Naive thymus-derived CD4-positive, alpha-beta T cell (primary cell): ENCODE measurements at regions of chrX and their contacts with region 1.

Region 1: GRCh38 chrX:14029425-14030173 is at the start of gene GEMIN8:
- DNase-seq: peak; percentile 72 to 93 (median 87)
- ATAC-seq: peak; percentile 97
- H3K4me3 ChIP-seq: peak within 1 kb of the TSS; percentile 60
- H3K4me3 Mint-ChIP-seq: peak within 1 kb of the TSS; percentile 80 to 100 (median 94)
- H3K27ac ChIP-seq: peak within 1 kb of the TSS; percentile 90
- H3K27ac Mint-ChIP-seq: peak within 1 kb of the TSS; percentile 91 to 100 (median 96)
- H3K4me1 ChIP-seq: peaks cover 19 to 26% of the 10 kb centered on the region in 2 donors
- H3K4me1 Mint-ChIP-seq: peaks cover 9 to 51% (median 41%) of the 10 kb centered on the region in 7 donors
- H3K27me3 ChIP-seq: no peaks in the 10 kb centered on the region
- H3K27me3 Mint-ChIP-seq: peaks cover 0 to 1% (median 0%) of the 10 kb centered on the region in 5 donors
- total RNA-seq, gene GEMIN8: 9.7 to 20.4 (median 11.7) TPM

Region 2: GRCh38 chrX:12791257-12792228 is 1238.1 kb before region 1 on chrX and contains the start of gene PRPS2:
- CTCF ChIA-PET with region 1: no interaction called
- POLR2A ChIA-PET with region 1: no interaction called
- intact Hi-C with region 1: loop called in 1 of 2 experiments (anchors 5 kb)
- DNase-seq: peak; percentile 39 to 74 (median 69)
- ATAC-seq: peak; percentile 96
- H3K4me3 ChIP-seq: peak within 1 kb of the TSS; percentile 74
- H3K4me3 Mint-ChIP-seq: peak within 1 kb of the TSS; percentile 85 to 92 (median 88)
- H3K27ac ChIP-seq: peak within 1 kb of the TSS; percentile 73
- H3K27ac Mint-ChIP-seq: peak within 1 kb of the TSS; percentile 59 to 86 (median 81)
- H3K4me1 ChIP-seq: peaks cover 0 to 6% of the 10 kb centered on the region in 2 donors
- H3K4me1 Mint-ChIP-seq: peaks cover 8 to 44% (median 34%) of the 10 kb centered on the region in 7 donors
- H3K27me3 ChIP-seq: no peaks in the 10 kb centered on the region
- H3K27me3 Mint-ChIP-seq: peaks cover 0 to 16% (median 0%) of the 10 kb centered on the region in 5 donors
- total RNA-seq, gene PRPS2: 24.7 to 95.8 (median 32.0) TPM

Region 3: DNA sequence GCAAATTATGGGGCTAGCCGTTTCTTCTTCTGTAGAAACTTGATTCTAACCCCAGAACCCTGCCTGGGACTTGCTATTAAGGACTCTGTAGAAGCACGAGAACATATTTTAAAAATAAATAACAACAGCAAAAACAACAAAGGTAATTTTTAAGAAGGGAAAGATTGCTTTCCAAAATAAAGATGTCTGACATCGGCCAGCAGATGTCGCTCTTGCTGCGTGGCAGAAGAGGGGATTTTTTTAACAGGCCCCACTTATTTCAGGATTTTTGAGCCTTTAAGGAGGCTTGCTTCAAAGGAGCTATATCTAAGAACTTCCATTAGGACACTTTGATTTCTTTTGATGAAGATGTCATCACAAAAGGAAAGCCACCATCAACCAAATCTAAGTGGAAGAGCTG is 523.0 kb before region 1 on chrX:
- CTCF ChIA-PET with region 1: interaction called, 25 read pairs
- POLR2A ChIA-PET with region 1: interaction called, 7 read pairs
- intact Hi-C with region 1: loop called (anchors 1 kb)
- DNase-seq: peak in 8 of 9 donors; percentile 10 to 47 (median 32)
- ATAC-seq: no peak
- H3K4me3 ChIP-seq: no peak overlapping the region
- H3K4me3 Mint-ChIP-seq: no peak overlapping the region
- H3K27ac ChIP-seq: no peak overlapping the region
- H3K27ac Mint-ChIP-seq: peak overlapping the region in 1 of 9 donors; percentile 15
- H3K4me1 ChIP-seq: no peaks in the 10 kb centered on the region
- H3K4me1 Mint-ChIP-seq: peaks cover 0 to 8% (median 2%) of the 10 kb centered on the region in 7 donors
- H3K27me3 ChIP-seq: no peaks in the 10 kb centered on the region
- H3K27me3 Mint-ChIP-seq: no peaks in the 10 kb centered on the region

Region 4: DNA sequence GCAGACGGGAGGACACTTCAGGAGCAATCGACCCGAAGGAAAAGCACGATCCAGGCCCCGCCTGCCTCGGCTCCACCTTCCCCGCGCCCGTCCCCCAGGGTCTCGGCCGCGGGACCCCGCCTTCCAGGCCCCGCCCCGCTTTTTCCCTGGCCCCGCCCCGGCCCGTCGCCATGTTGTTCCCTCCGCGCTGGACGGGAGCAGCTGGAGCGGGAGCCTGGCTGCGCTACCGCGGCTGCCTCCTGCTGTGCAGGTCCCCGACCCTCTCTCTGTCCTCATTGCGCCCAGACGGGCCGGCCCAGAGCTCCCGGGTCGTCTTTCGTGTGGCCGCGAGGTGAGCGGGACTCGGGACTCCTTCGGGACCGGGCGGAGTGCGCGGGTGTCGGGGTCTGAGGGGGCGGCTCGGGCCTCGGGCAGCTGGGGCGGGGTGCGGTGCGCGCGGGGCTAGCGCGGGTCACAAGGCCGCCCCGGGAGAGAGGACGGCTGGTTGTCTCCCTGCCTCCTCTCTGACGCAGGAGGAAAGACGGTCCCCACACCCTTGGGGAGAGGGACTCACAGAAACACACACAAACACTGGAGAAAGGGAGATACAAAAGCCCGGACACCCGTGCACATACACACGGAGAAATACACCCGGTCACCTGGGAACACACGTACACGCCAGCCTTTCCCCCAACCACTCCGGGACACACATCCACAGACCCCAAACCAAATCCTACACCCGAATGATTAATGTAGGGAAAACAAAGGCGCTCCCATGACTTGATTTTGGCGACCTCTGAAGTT is 340.4 kb before region 1 on chrX and contains the start of gene RAB9A:
- CTCF ChIA-PET with region 1: interaction called, 4 read pairs
- POLR2A ChIA-PET with region 1: interaction called, 7 read pairs
- intact Hi-C with region 1: loop called in 1 of 2 experiments (anchors 1 kb)
- DNase-seq: peak; percentile 62 to 85 (median 76)
- ATAC-seq: peak; percentile 96
- H3K4me3 ChIP-seq: peak within 1 kb of the TSS; percentile 72
- H3K4me3 Mint-ChIP-seq: peak within 1 kb of the TSS; percentile 79 to 96 (median 92)
- H3K27ac ChIP-seq: peak within 1 kb of the TSS; percentile 84
- H3K27ac Mint-ChIP-seq: peak within 1 kb of the TSS; percentile 86 to 98 (median 95)
- H3K4me1 ChIP-seq: peaks cover 14 to 20% of the 10 kb centered on the region in 2 donors
- H3K4me1 Mint-ChIP-seq: peaks cover 25 to 55% (median 40%) of the 10 kb centered on the region in 7 donors
- H3K27me3 ChIP-seq: no peaks in the 10 kb centered on the region
- H3K27me3 Mint-ChIP-seq: no peaks in the 10 kb centered on the region
- total RNA-seq, gene RAB9A: 10.1 to 22.8 (median 18.3) TPM

Region 5: DNA sequence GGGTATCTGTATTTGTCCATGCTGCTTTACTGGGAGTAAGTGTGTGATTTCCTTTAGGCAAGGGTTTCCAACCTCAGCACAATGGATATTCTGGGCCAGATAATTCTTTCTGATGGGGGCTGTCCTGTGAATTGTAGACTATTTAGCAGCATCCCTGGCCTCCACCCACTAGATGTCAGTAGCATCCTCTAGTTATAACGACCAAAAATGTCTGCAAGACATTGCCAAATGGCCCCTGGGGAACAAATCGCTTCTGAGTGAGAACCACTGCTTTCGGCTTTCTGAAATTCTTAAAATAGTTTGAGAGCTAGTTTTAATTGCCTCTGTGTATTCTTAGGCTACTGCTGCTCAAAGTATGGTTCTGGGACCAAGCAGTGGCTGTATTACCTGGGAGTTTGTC is 131.5 kb before region 1 on chrX:
- CTCF ChIA-PET with region 1: no interaction called
- POLR2A ChIA-PET with region 1: no interaction called
- intact Hi-C with region 1: loop called in 1 of 2 experiments (anchors 5 kb)
- DNase-seq: no peak
- ATAC-seq: no peak
- H3K4me3 ChIP-seq: no peak overlapping the region
- H3K4me3 Mint-ChIP-seq: no peak overlapping the region
- H3K27ac ChIP-seq: no peak overlapping the region
- H3K27ac Mint-ChIP-seq: no peak overlapping the region
- H3K4me1 ChIP-seq: no peaks in the 10 kb centered on the region
- H3K4me1 Mint-ChIP-seq: no peaks in the 10 kb centered on the region
- H3K27me3 ChIP-seq: no peaks in the 10 kb centered on the region
- H3K27me3 Mint-ChIP-seq: peaks cover 0 to 4% (median 0%) of the 10 kb centered on the region in 5 donors

Region 6: DNA sequence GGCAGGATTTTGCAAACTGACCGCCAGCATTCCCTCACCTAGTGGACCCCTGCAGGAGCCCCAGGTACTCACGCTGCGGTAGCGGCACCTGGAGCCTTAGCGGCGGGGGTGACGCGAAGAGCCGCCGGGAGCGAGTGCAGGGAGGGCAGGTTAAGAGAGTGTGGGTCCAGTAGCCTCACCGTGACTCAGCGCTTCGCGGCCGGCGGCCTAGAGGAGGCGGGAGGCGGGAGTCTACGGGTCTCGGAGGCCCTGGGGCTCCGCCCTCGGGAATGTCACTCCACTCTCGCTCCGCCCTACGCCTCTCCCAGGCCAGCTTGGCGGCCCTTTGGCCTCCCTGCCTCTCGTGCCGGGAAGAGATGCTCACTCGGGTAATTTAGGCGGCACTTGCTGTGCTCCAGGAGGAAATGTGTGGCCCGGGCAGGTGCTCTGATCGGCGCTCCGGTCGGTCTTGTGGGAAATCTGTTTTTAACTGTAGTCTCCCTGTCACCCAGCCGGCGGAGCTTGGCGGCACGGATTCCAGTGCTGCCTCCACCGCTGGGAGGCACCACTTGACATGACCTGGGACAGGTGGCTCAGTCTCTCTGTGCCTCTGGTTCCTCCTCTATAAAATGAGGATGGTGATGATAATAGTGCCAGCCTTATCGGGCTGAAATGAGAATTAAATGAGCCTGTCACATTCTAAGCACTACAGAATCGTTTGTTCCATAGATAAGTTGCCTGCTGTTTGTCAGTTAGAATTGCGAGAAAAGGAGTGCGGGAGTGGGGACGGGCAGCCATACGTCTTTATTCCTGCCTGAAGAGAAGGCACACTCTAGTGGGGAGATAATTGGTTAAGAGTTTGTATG is 1463.7 kb after region 1 on chrX and contains the start of gene PIR:
- CTCF ChIA-PET with region 1: no interaction called
- POLR2A ChIA-PET with region 1: no interaction called
- intact Hi-C with region 1: loop called in 1 of 2 experiments (anchors 10 kb)
- DNase-seq: peak in 8 of 9 donors; percentile 3 to 72 (median 16)
- ATAC-seq: peak; percentile 88
- H3K4me3 ChIP-seq: peak within 1 kb of the TSS; percentile 46
- H3K4me3 Mint-ChIP-seq: peak within 1 kb of the TSS; percentile 75 to 85 (median 82)
- H3K27ac ChIP-seq: no peak within 1 kb of the TSS
- H3K27ac Mint-ChIP-seq: peak within 1 kb of the TSS in 1 of 9 donors; percentile 58
- H3K4me1 ChIP-seq: no peaks in the 10 kb centered on the region
- H3K4me1 Mint-ChIP-seq: peaks cover 2 to 18% (median 9%) of the 10 kb centered on the region in 7 donors
- H3K27me3 ChIP-seq: no peaks in the 10 kb centered on the region
- H3K27me3 Mint-ChIP-seq: peaks cover 0 to 6% (median 4%) of the 10 kb centered on the region in 5 donors
- total RNA-seq, gene PIR: 0.49 to 4.6 (median 0.70) TPM in 3 of 5 experiments, not detected in the others